ENCODE measurements at regions of chr5 and their contacts with region 1.

Region 1: DNA sequence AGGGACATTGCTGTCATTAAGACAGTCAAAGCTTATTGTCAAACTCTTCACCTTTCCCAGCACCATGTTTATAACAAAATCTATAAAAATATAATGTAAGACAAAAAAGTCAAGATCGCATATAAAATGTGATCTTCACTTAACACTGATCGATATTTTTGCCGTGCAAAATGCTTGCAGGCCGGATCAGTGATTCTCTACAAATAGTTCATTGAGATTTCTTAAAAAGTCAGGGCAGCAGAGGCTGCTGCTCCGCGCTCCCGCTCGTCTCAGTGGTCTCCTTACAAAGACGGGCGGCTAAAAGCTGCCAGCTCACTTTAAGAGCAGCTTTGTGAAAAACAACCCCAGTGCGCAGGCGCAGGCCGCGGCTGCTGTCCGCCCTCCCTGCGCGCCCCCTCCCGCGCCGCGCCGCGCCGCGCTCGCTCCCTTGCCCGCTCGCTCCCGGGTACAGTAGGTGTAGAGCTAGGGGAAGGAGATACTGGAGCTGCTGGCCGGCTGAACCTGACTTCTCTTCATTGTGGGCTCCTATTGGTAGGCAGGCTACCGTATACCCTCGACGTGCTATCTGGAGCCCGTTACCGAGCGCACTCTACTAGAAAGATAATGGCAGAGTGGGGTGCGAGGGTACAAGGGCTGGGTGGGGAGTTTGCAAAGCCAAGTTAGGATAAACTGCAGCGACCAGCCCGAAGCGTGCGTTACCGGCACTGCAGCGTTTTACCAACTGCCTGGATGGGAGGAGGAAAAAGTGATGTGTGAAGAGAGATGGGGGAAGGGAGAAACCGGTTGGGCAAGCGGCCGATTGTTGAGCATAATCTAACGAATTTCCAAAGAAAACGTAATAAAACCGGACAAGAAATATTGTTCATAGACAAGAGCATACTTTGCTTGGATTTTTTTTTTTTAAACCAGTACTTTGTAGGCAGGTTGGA is at the start of gene ARRDC3:
- DNase-seq: peak; percentile 95 to 98 (median 98)
- ATAC-seq: peak; percentile 58
- H3K4me3 ChIP-seq: peak within 1 kb of the TSS; percentile 81
- H3K4me3 Mint-ChIP-seq: peak within 1 kb of the TSS; percentile 93 to 100 (median 98)
- H3K27ac ChIP-seq: peak within 1 kb of the TSS; percentile 97
- H3K27ac Mint-ChIP-seq: peak within 1 kb of the TSS; percentile 97 to 100 (median 98)
- H3K4me1 ChIP-seq: peaks cover 17 to 19% of the 10 kb centered on the region in 2 donors
- H3K4me1 Mint-ChIP-seq: peaks cover 6 to 32% (median 24%) of the 10 kb centered on the region in 7 donors
- H3K27me3 ChIP-seq: no peaks in the 10 kb centered on the region
- H3K27me3 Mint-ChIP-seq: no peaks in the 10 kb centered on the region
- total RNA-seq, gene ARRDC3: 29.8 to 256 (median 172) TPM

Region 2: GRCh38 chr5:90529194-90529938 is 853.9 kb before region 1 on chr5 and contains the start of gene LYSMD3:
- CTCF ChIA-PET with region 1: no interaction called
- POLR2A ChIA-PET with region 1: interaction called, 6 read pairs
- intact Hi-C with region 1: loop called (anchors 1 kb)
- DNase-seq: peak; percentile 94 to 97 (median 96)
- ATAC-seq: peak; percentile 96
- H3K4me3 ChIP-seq: peak within 1 kb of the TSS; percentile 89
- H3K4me3 Mint-ChIP-seq: peak within 1 kb of the TSS; percentile 89 to 100 (median 99)
- H3K27ac ChIP-seq: peak within 1 kb of the TSS; percentile 96
- H3K27ac Mint-ChIP-seq: peak within 1 kb of the TSS; percentile 94 to 100 (median 99)
- H3K4me1 ChIP-seq: peaks cover 13 to 17% of the 10 kb centered on the region in 2 donors
- H3K4me1 Mint-ChIP-seq: peaks cover 20 to 42% (median 31%) of the 10 kb centered on the region in 7 donors
- H3K27me3 ChIP-seq: no peaks in the 10 kb centered on the region
- H3K27me3 Mint-ChIP-seq: peaks cover 12 to 24% (median 17%) of the 10 kb centered on the region in 5 donors
- total RNA-seq, gene LYSMD3: 15.8 to 32.0 (median 25.6) TPM

Region 3: DNA sequence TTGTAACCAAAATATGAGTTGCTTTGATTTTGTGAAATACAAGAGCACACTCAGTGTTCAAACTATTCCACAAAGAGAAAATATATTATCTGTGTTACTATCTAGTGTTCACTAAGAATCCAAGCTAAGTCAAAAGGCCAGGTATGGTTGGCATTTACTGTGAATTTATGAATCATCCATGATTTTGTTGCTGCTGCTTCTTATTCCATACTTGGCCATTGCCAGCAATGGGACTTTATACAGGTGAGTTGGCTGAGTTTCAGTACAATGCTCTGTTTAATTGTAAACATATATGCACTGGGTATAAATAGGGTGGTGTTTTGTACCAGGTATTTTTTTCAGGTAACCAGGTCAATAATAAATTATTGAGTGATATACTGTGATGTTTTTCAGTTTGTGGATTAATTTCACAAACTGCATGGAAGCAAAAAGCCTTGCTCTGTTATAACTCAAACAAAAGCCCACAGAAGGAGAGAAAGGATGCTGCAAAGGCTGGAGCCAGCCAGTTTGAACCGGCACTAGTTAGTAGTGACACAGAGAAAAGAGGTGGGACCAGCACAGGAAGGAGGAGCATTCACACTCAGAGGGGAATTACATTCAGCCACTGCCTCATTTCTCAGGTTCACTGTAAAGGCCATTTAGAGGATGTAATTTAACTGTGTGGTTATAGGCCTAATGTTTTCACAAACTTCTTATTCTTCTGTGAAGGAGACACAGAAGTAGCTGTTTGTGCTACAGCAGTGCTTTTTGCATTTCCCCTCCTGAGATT is 442.9 kb before region 1 on chr5:
- CTCF ChIA-PET with region 1: no interaction called
- POLR2A ChIA-PET with region 1: no interaction called
- intact Hi-C with region 1: loop called in 1 of 2 experiments (anchors 2 kb)
- DNase-seq: peak in 8 of 9 donors; percentile 5 to 70 (median 37)
- ATAC-seq: peak; percentile 96
- H3K4me3 ChIP-seq: no peak overlapping the region
- H3K4me3 Mint-ChIP-seq: peak overlapping the region in 3 of 10 donors; percentile 10 to 55 (median 32)
- H3K27ac ChIP-seq: no peak overlapping the region
- H3K27ac Mint-ChIP-seq: peak overlapping the region in 8 of 9 donors; percentile 45 to 87 (median 55)
- H3K4me1 ChIP-seq: peaks cover 0 to 6% of the 10 kb centered on the region in 2 donors
- H3K4me1 Mint-ChIP-seq: peaks cover 4 to 20% (median 11%) of the 10 kb centered on the region in 7 donors
- H3K27me3 ChIP-seq: no peaks in the 10 kb centered on the region
- H3K27me3 Mint-ChIP-seq: no peaks in the 10 kb centered on the region

Region 4: GRCh38 chr5:91219803-91220371 is 163.4 kb before region 1 on chr5:
- CTCF ChIA-PET with region 1: interaction called, 180 read pairs
- POLR2A ChIA-PET with region 1: interaction called, 19 read pairs
- intact Hi-C with region 1: loop called in 1 of 2 experiments (anchors 1 kb)
- DNase-seq: peak in 5 of 9 donors; percentile 13 to 31 (median 17)
- ATAC-seq: peak; percentile 54
- H3K4me3 ChIP-seq: no peak overlapping the region
- H3K4me3 Mint-ChIP-seq: no peak overlapping the region
- H3K27ac ChIP-seq: no peak overlapping the region
- H3K27ac Mint-ChIP-seq: peak overlapping the region in 1 of 9 donors; percentile 41
- H3K4me1 ChIP-seq: no peaks in the 10 kb centered on the region
- H3K4me1 Mint-ChIP-seq: peaks cover 0 to 3% (median 0%) of the 10 kb centered on the region in 7 donors
- H3K27me3 ChIP-seq: no peaks in the 10 kb centered on the region
- H3K27me3 Mint-ChIP-seq: peaks cover 0 to 5% (median 0%) of the 10 kb centered on the region in 5 donors

Region 5: GRCh38 chr5:91266184-91266705 is 117.0 kb before region 1 on chr5:
- CTCF ChIA-PET with region 1: interaction called, 3 read pairs
- POLR2A ChIA-PET with region 1: interaction called, 8 read pairs
- intact Hi-C with region 1: loop called in 1 of 2 experiments (anchors 5 kb)
- DNase-seq: no peak
- ATAC-seq: peak; percentile 53
- H3K4me3 ChIP-seq: no peak overlapping the region
- H3K4me3 Mint-ChIP-seq: no peak overlapping the region
- H3K27ac ChIP-seq: no peak overlapping the region
- H3K27ac Mint-ChIP-seq: no peak overlapping the region
- H3K4me1 ChIP-seq: no peaks in the 10 kb centered on the region
- H3K4me1 Mint-ChIP-seq: peaks cover 9 to 27% (median 18%) of the 10 kb centered on the region in 7 donors
- H3K27me3 ChIP-seq: no peaks in the 10 kb centered on the region
- H3K27me3 Mint-ChIP-seq: peaks cover 0 to 14% (median 0%) of the 10 kb centered on the region in 5 donors

Region 6: GRCh38 chr5:91366571-91366970 is 16.7 kb before region 1 on chr5:
- CTCF ChIA-PET with region 1: interaction called, 9 read pairs
- POLR2A ChIA-PET with region 1: interaction called, 82 read pairs
- intact Hi-C with region 1: loop called in 1 of 2 experiments (anchors 1 kb)
- DNase-seq: no peak
- ATAC-seq: no peak
- H3K4me3 ChIP-seq: no peak overlapping the region
- H3K4me3 Mint-ChIP-seq: no peak overlapping the region
- H3K27ac ChIP-seq: no peak overlapping the region
- H3K27ac Mint-ChIP-seq: peak overlapping the region in 3 of 9 donors; percentile 20 to 25 (median 23)
- H3K4me1 ChIP-seq: peaks cover under 1 to 7% of the 10 kb centered on the region in 2 donors
- H3K4me1 Mint-ChIP-seq: peaks cover 0 to 32% (median 23%) of the 10 kb centered on the region in 7 donors
- H3K27me3 ChIP-seq: no peaks in the 10 kb centered on the region
- H3K27me3 Mint-ChIP-seq: peaks cover 0 to 3% (median 0%) of the 10 kb centered on the region in 5 donors

Region 7: DNA sequence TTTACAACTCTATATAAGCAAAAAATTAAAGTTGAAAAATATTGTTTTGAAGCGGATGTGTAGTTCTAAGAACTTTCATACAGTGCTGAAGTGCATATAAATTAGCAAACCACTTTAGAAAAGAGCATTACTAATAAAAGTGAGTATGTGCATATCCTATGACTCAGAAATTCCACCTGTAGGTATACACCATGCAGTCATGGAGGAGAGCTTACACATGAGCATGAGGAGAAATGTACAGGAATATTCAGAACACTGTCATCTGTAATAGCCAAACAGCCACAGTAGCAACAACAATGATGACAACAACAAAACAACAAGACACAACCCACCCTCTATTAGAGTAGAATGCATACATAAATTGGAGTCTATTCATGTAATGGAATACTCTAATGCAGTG is 138.0 kb after region 1 on chr5:
- CTCF ChIA-PET with region 1: no interaction called
- POLR2A ChIA-PET with region 1: no interaction called
- intact Hi-C with region 1: no loop called
- DNase-seq: no peak
- ATAC-seq: no peak
- H3K4me3 ChIP-seq: no peak overlapping the region
- H3K4me3 Mint-ChIP-seq: no peak overlapping the region
- H3K27ac ChIP-seq: no peak overlapping the region
- H3K27ac Mint-ChIP-seq: no peak overlapping the region
- H3K4me1 ChIP-seq: no peaks in the 10 kb centered on the region
- H3K4me1 Mint-ChIP-seq: no peaks in the 10 kb centered on the region
- H3K27me3 ChIP-seq: no peaks in the 10 kb centered on the region
- H3K27me3 Mint-ChIP-seq: peaks cover 0 to 6% (median 0%) of the 10 kb centered on the region in 5 donors

Region 8: GRCh38 chr5:91598227-91598626 is 214.9 kb after region 1 on chr5:
- CTCF ChIA-PET with region 1: no interaction called
- POLR2A ChIA-PET with region 1: no interaction called
- intact Hi-C with region 1: no loop called
- DNase-seq: no peak
- ATAC-seq: no peak
- H3K4me3 ChIP-seq: no peak overlapping the region
- H3K4me3 Mint-ChIP-seq: no peak overlapping the region
- H3K27ac ChIP-seq: no peak overlapping the region
- H3K27ac Mint-ChIP-seq: no peak overlapping the region
- H3K4me1 ChIP-seq: no peaks in the 10 kb centered on the region
- H3K4me1 Mint-ChIP-seq: no peaks in the 10 kb centered on the region
- H3K27me3 ChIP-seq: no peaks in the 10 kb centered on the region
- H3K27me3 Mint-ChIP-seq: peaks cover 0 to 9% (median under 1%) of the 10 kb centered on the region in 5 donors

Measured in naive thymus-derived CD4-positive, alpha-beta T cell (primary cell).